Sigmoid colon (tissue), 7 donors: ENCODE measurements at regions of chr11 and their contacts with region 1.

Region 1: GRCh38 chr11:134050541-134051383 is 18.1 kb upstream of the JAM3 start:
- DNase-seq: peak; percentile 88
- H3K4me3 ChIP-seq: peak overlapping the region in 3 of 4 donors; percentile 30 to 37 (median 31)
- H3K27ac ChIP-seq: peak overlapping the region; percentile 28 to 57 (median 47)
- H3K4me1 ChIP-seq: peaks cover 0 to 33% (median 32%) of the 10 kb centered on the region in 4 donors
- H3K27me3 ChIP-seq: no peaks in the 10 kb centered on the region
- CTCF ChIP-seq: peak; percentile 92 to 96 (median 94)
- EP300 ChIP-seq: no peak
- POLR2A ChIP-seq: no peak

Region 2: DNA sequence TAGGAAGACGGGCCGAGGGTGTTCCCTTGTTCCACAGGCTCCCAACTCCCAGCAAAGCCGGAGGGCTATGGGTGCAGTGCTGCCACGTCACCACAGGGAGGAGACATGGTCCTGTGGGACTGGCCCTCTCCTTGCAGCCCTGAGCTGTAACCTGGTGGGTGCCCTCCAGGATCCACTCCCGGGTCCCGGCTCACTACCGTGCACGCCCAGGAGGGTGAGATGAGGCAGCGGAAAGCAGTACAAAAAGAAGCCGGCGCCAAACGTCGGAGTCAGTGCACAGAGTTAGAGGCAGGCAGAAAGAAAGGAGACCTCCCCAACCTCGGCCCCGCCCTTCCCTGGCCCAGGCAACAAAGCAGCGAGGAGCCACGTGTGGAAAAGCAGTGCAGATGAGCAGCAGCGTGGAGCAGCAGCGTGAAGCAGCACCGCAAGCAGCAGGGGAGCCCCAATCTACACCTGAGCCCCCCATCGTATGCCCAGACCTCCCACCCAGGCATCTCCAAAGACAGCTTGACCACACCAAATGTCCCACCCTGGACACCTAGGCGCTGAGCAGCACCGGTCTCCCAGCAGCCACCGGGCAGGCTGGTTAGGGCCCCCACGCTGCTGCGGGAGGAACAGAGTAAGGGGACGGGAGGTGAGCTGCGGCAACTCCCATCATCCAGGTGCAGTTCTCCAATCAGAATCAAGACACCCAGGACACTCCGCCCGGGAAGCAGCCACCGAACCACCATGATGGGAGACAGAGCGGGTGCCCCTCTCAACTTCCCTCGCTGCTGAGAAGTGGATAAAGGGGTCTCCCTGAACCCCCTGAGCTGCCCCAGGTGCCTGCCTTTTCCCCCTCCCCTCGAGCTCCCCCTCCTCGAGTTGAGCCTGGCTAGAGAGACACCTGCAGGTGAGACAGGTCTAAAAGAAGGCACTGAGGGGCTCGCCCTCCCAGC is 122.8 kb before region 1 on chr11:
- intact Hi-C with region 1: loop called (anchors 2 kb)
- DNase-seq: peak; percentile 87
- H3K4me3 ChIP-seq: no peak overlapping the region
- H3K27ac ChIP-seq: peak overlapping the region in 3 of 4 donors; percentile 3 to 61 (median 8)
- H3K4me1 ChIP-seq: peaks cover 0 to 24% (median 13%) of the 10 kb centered on the region in 4 donors
- H3K27me3 ChIP-seq: no peaks in the 10 kb centered on the region
- CTCF ChIP-seq: peak; percentile 79 to 96 (median 88)
- EP300 ChIP-seq: no peak
- POLR2A ChIP-seq: no peak

Region 3: GRCh38 chr11:133942577-133942976 is 108.2 kb before region 1 on chr11:
- intact Hi-C with region 1: no loop called
- DNase-seq: no peak
- H3K4me3 ChIP-seq: no peak overlapping the region
- H3K27ac ChIP-seq: no peak overlapping the region
- H3K4me1 ChIP-seq: peaks cover 0 to 31% (median 29%) of the 10 kb centered on the region in 4 donors
- H3K27me3 ChIP-seq: no peaks in the 10 kb centered on the region
- CTCF ChIP-seq: no peak
- EP300 ChIP-seq: no peak
- POLR2A ChIP-seq: no peak

Region 4: GRCh38 chr11:134068829-134069425 is 18.2 kb after region 1 on chr11 and contains the start of gene JAM3:
- intact Hi-C with region 1: loop called (anchors 2 kb)
- DNase-seq: peak; percentile 97
- H3K4me3 ChIP-seq: peak within 1 kb of the TSS; percentile 65 to 81 (median 72)
- H3K27ac ChIP-seq: peak within 1 kb of the TSS; percentile 88 to 93 (median 90)
- H3K4me1 ChIP-seq: peaks cover 0 to 27% (median 13%) of the 10 kb centered on the region in 4 donors
- H3K27me3 ChIP-seq: no peaks in the 10 kb centered on the region
- CTCF ChIP-seq: no peak
- EP300 ChIP-seq: no peak
- POLR2A ChIP-seq: peak; percentile 58 to 79
- total RNA-seq, gene JAM3: 69.4 to 125 (median 82.0) TPM